ENCODE measurements at regions of chr14 and their contacts with region 1.

Region 1: GRCh38 chr14:51084962-51085361 is 9.9 kb downstream of the TRIM9 start:
- DNase-seq: no peak
- ATAC-seq: no peak
- H3K4me3 Mint-ChIP-seq: no peak overlapping the region
- H3K27ac Mint-ChIP-seq: no peak overlapping the region
- H3K4me1 Mint-ChIP-seq: peaks cover 7% of the 10 kb centered on the region; the same call in 1 of the 2 replicates
- H3K27me3 Mint-ChIP-seq: no peaks in the 10 kb centered on the region
- CTCF ChIP-seq: no peak

Region 2: GRCh38 chr14:51094901-51095853 is 10.2 kb after region 1 on chr14 and contains the start of gene TRIM9:
- CTCF ChIA-PET with region 1: interaction called, 14 read pairs
- POLR2A ChIA-PET with region 1: no interaction called
- DNase-seq: peak; percentile 99
- ATAC-seq: peak; percentile 96
- H3K4me3 Mint-ChIP-seq: peak within 1 kb of the TSS; percentile 84
- H3K27ac Mint-ChIP-seq: peak within 1 kb of the TSS; percentile 32; the same call in 1 of the 2 replicates
- H3K4me1 Mint-ChIP-seq: peaks cover 19% of the 10 kb centered on the region
- H3K27me3 Mint-ChIP-seq: peaks cover 64% of the 10 kb centered on the region
- CTCF ChIP-seq: no peak
- total RNA-seq, gene TRIM9: 4.0 to 4.4 TPM (median 4.2 TPM) in 3 replicates

Measured in WTC11 (cell line).